ENCODE measurements at regions of chr10 and their contacts with region 1.

Region 1: DNA sequence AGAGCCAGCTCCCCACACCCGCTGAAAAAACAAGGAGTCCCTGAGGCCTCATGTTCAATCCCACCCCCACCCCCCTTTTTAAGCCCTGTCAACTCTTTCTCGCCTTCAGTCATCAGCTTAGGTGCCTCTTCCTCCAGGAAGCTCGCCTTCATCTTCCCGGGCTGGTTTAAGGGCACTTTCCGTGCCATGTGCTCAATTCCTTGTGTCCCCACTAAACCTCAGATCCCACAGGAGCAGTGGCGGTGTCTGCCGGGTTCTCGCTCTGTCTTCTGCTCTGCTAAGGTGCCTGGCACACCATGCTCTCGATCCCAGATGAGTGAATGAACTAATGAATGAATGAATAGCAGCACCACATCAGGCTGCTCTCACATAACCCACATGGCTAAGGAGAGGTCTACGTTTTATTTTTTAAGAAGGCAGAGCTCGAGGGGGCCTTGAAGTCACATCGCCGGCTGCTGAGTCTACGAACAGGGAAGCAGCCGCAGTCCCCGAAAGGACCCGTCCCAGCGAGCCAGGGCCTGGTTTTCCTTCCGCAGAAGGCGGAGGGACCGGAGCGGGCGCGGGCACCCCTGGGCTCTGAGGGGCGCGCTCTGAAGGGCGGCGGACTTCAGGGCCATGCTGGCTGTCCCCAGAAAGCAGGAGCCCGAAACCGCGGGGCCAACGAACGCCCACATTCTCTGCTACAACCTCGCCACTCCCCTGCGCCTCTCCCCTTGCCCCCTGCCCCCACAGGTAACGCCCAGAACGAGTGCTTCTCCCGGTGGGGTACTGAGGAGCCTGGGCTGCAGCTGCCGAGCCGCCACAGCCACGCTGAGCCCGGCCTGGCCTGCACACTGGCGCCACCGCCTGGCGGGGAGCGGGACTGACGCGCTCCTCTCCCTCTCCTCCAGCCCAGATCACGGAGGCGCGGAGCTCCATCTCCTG is 73.4 kb upstream of the KCNMA1 start:
- DNase-seq: peak; percentile 55 to 98 (median 82)
- ATAC-seq: peak; percentile 97 to 100 (median 100)
- H3K4me3 ChIP-seq: peak overlapping the region; percentile 11 to 43 (median 22)
- H3K27ac ChIP-seq: no peak overlapping the region
- H3K4me1 ChIP-seq: no peaks in the 10 kb centered on the region
- H3K27me3 ChIP-seq: no peaks in the 10 kb centered on the region
- CTCF ChIP-seq: peak; percentile 97 to 98 (median 98)

Region 2: GRCh38 chr10:77165445-77166208 is 545.4 kb before region 1 on chr10:
- intact Hi-C with region 1: loop called in 2 of 3 experiments (anchors 5 to 10 kb)
- DNase-seq: peak in 3 of 6 donors; percentile 23 to 60 (median 25)
- ATAC-seq: peak; percentile 75 to 91 (median 88)
- H3K4me3 ChIP-seq: peak overlapping the region in 2 of 4 donors; percentile 9 to 33
- H3K27ac ChIP-seq: peak overlapping the region in 2 of 4 donors; percentile 9 to 25
- H3K4me1 ChIP-seq: peaks cover 0 to 8% (median 0%) of the 10 kb centered on the region in 3 donors
- H3K27me3 ChIP-seq: no peaks in the 10 kb centered on the region
- CTCF ChIP-seq: peak; percentile 47 to 64 (median 61)

Region 3: GRCh38 chr10:77173615-77174461 is 537.2 kb before region 1 on chr10:
- intact Hi-C with region 1: loop called in 2 of 3 experiments (anchors 5 to 10 kb)
- DNase-seq: peak; percentile 50 to 83 (median 70)
- ATAC-seq: peak; percentile 71 to 98 (median 93)
- H3K4me3 ChIP-seq: no peak overlapping the region
- H3K27ac ChIP-seq: no peak overlapping the region
- H3K4me1 ChIP-seq: no peaks in the 10 kb centered on the region
- H3K27me3 ChIP-seq: no peaks in the 10 kb centered on the region
- CTCF ChIP-seq: peak; percentile 66 to 88 (median 82)